ENCODE measurements at regions of chr1 and their contacts with region 1.

Region 1: DNA sequence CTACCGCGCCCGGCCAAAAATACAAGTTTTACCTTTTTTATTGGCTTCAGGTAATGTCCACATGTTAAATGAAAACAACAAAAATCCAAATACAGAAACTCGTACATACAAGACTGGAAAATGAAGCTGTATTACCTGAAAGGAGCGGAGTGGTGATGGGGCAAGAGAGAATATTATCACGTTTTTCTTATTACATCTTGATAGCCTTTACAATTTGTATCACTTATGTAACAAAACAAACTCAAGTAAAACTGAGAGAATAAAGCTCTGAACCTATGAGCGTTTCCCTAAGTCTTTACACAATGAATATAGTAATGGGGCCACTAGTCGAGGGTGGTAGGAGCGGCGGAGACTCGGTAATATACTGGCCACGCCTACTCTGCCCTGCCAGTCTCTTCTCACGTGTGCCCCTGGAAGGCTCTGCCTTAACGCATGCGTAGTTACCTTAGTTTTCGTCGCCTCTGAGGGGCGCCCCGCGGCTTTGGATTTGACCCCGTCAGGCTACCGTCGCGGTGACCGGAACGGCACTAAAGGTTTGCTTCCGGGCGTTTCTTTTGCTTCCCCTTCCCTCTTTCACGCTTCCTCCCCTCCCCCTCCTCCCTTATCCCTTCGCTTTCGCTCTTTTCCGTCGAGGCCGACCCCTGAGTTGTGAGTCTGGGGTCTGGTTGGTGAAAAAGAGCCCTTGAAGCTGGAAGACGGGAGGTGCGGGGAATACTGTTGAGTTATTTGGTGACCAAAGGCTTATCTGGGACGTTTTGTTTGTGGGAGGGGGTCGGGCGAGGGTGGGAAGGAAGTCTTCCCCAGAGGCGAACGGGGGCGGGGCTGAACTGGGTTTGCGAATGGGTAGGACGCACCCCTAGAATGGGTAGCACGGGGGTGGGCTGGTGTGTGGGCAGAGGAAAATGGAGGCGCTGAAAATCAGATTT is at the start of gene SETDB1:
- DNase-seq: peak; percentile 98
- H3K4me3 Mint-ChIP-seq: peak within 1 kb of the TSS; percentile 96
- H3K27ac Mint-ChIP-seq: peak within 1 kb of the TSS; percentile 94
- H3K4me1 Mint-ChIP-seq: peaks cover 21% of the 10 kb centered on the region
- H3K27me3 Mint-ChIP-seq: no peaks in the 10 kb centered on the region
- total RNA-seq, gene SETDB1: 42.3 to 50.0 TPM

Region 2: DNA sequence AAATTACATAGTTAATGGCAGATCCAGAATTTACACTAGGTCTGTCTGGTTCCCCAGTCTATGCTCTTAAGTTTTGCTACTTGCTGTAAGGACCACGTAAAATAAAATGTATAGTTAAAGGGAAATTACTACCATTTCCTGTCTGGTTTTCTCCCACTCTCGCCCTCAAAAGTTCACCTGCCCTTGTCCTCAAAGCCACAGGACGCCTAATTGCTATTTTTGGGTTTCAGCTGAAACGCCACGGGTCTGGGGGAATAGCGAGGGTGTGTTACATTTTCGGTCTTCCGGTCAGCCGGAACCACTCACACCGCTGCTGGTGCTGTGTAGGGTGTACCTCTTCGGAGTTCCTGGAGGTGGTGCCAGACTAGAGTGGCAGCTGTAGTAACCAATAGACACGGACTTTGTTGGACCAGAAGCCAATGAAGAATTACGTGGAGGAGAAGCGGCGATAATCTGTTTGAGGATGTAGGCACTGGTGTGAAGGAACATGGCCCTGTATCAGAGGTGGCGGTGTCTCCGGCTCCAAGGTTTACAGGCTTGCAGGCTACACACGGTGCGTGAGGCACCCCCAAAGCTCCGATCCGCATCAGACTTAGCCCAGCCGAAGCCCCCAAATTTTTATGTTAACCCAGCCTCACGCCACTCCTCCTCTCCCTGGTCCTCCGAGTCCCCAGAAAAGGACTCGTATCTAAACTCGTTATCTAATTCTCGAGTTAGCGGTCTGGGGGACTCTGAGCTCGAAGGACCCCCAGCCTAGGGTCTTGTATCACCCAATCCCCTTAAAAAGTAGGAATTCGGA is 438.9 kb before region 1 on chr1 and contains the start of gene TARS2:
- CTCF ChIA-PET with region 1: no interaction called
- POLR2A ChIA-PET with region 1: no interaction called
- intact Hi-C with region 1: loop called (anchors 1 kb)
- DNase-seq: peak; percentile 98
- H3K4me3 Mint-ChIP-seq: peak within 1 kb of the TSS; percentile 83
- H3K27ac Mint-ChIP-seq: peak within 1 kb of the TSS; percentile 90
- H3K4me1 Mint-ChIP-seq: peaks cover 21% of the 10 kb centered on the region
- H3K27me3 Mint-ChIP-seq: no peaks in the 10 kb centered on the region
- total RNA-seq, gene TARS2: 46.3 to 51.7 TPM

Region 3: DNA sequence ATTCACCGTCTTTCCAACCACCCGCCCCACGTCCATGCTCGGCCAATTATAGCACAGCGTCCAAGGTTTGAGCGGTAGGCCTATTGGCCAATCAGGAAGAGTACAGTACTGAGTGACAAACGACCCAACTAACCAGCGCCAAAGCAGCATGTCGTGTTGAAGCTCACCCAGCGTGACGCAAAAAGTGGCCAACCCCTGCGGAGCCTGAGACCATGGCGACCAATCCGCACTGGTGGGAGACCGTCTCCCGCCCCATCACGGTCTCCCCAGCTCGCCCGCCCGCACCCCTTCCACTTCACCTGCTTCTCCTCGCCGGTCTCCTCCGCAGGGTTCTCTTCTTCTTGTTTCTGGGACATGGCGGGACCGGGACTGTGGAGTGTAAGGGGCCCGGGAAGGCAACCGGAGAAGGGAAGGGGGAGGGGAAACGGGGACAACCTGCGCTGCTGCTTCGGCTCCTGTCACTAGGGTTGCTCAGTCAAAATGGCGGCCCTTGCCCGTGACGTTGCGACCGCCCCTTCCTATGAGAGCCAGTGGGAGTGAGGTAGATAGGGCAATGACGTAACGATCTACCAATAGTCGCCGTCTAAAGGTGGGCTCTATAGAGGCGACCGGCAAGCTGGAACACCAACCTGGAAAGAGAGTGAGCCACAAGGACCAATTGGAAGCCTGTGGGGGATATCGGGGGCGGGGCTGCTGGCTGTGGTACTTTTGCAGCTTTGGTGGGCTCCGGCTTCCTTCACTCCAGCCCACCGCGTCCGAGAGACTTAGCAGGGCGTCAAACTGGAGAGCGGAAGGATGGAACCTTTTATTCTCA is 296.8 kb before region 1 on chr1 and contains the start of gene ENSA:
- CTCF ChIA-PET with region 1: no interaction called
- POLR2A ChIA-PET with region 1: no interaction called
- intact Hi-C with region 1: loop called (anchors 1 kb)
- DNase-seq: peak; percentile 97
- H3K4me3 Mint-ChIP-seq: no peak within 1 kb of the TSS
- H3K27ac Mint-ChIP-seq: no peak within 1 kb of the TSS
- H3K4me1 Mint-ChIP-seq: peaks cover 41% of the 10 kb centered on the region
- H3K27me3 Mint-ChIP-seq: no peaks in the 10 kb centered on the region
- total RNA-seq, gene ENSA: 212 to 219 TPM

Region 4: DNA sequence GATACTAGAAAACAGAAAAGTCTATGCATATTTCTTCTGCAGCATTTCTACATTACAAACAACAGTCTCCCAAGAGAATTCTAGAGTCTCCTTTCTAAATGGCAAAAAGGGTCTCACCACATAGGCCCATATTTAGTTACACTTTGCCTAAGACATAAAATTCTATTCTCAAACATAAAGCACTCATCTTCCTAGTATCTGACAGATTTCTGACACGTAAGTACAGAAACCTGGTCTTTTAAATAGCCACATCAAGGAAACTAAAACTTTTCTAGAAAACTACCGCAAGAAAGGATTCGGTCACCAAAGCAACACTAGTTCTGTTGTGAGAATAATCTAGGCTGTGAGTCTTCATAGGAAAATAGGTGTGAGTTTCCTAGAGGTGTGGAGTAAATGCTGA is 84.5 kb before region 1 on chr1:
- CTCF ChIA-PET with region 1: interaction called, 3 read pairs
- POLR2A ChIA-PET with region 1: interaction called, 3 read pairs
- intact Hi-C with region 1: loop called (anchors 1 kb)
- DNase-seq: no peak
- H3K4me3 Mint-ChIP-seq: no peak overlapping the region
- H3K27ac Mint-ChIP-seq: no peak overlapping the region
- H3K4me1 Mint-ChIP-seq: peaks cover 23% of the 10 kb centered on the region
- H3K27me3 Mint-ChIP-seq: no peaks in the 10 kb centered on the region

Region 5: GRCh38 chr1:150876119-150876454 is 50.0 kb before region 1 on chr1:
- CTCF ChIA-PET with region 1: interaction called, 4 read pairs
- POLR2A ChIA-PET with region 1: no interaction called
- intact Hi-C with region 1: loop called (anchors 1 kb)
- DNase-seq: no peak
- H3K4me3 Mint-ChIP-seq: peak overlapping the region; percentile 84
- H3K27ac Mint-ChIP-seq: peak overlapping the region; percentile 85
- H3K4me1 Mint-ChIP-seq: peaks cover 30% of the 10 kb centered on the region
- H3K27me3 Mint-ChIP-seq: no peaks in the 10 kb centered on the region

Region 6: DNA sequence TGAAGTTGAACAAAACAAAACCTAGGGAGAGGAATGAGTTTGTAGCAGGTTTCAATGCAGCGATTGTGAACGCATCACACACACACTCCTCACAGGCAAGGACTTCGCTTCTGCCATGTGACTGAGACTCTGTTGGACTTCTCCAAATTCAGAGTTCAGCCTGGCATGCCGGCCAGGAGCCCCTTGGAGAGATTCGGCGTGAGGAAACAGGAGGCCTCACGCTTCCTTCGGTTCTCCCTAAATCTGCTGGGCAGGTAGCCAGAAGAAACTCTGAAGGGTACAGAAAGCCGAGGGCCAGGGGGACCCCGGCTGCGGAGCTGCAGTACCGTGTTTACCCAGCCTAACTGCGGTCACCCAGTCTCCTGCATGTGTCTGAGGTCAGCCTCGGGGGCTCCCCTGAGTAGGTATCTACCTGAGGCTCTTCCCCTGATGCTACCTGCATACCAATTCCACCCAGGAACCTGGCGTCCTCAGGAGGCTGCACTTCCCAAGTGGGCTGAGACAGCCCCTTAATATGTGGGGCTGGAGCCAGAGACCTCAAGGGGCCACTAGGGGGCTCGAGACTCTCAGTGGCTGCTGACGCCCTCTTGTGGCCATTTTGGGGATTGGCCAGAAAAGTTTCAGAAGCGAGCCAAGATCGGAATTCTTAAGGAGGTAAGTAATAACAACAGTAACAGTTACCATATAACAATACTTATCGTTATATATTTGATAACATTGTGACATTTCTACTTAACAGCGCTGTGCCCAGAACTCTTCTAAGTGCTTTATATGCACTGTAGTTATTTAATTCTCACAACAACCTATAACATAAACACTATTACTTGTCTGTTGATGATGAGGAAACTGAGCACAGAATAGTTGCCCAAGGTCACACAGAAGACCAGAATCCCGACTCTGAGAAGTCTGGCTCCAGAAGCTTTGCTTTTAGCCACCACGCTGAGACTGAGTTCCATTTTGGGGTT is 53.3 kb after region 1 on chr1:
- CTCF ChIA-PET with region 1: interaction called, 7 read pairs
- POLR2A ChIA-PET with region 1: no interaction called
- intact Hi-C with region 1: loop called (anchors 2 kb)
- DNase-seq: peak; percentile 92
- H3K4me3 Mint-ChIP-seq: peak overlapping the region; percentile 7
- H3K27ac Mint-ChIP-seq: no peak overlapping the region
- H3K4me1 Mint-ChIP-seq: peaks cover 33% of the 10 kb centered on the region
- H3K27me3 Mint-ChIP-seq: no peaks in the 10 kb centered on the region